ENCODE measurements at regions of chr3 and their contacts with region 1.

Region 1: DNA sequence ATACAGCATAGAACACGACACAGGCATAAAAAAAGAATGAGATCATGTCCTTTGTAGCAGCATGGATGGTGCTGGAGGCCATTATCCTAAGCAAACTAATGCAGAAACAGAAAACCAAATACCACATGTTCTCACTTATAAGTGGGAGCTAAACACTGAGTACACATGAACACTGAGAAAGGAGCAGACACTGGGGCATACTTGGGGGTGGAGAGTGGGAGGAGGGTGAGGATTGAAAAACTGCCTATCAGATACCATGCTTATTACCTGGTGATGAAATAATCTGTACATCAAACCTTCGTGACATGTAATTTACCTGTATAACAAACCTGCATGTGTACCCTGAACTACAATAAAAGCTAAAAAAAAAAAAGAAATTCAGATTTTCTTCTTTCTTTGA is 100.4 kb downstream of the PPM1L start:
- DNase-seq: no peak
- H3K4me3 ChIP-seq: no peak overlapping the region
- H3K27ac ChIP-seq: no peak overlapping the region
- H3K4me1 ChIP-seq: no peaks in the 10 kb centered on the region
- H3K27me3 ChIP-seq: no peaks in the 10 kb centered on the region
- CTCF ChIP-seq: no peak
- EP300 ChIP-seq: no peak
- POLR2A ChIP-seq: no peak

Region 2: DNA sequence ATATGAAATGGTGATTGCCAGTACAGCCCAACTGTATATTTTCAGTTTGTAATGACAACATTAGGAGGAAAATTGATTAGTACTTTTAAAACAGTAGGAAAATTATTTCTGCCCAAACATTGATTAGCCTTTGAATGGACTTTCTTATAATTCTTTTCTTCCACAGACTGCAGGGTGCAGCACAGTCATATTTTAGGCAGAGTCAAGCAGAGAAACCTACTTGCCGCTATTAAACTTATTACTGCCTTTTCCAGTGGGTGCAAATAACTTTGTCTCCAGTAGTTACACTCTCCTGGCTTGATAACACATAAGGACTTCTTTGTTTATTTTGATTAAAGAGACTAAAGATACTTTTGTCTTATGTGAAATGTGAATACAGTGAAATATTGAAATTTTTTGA is 15.0 kb before region 1 on chr3:
- in situ Hi-C with region 1: no loop called
- intact Hi-C with region 1: loop called (anchors 1 kb)
- DNase-seq: no peak
- H3K4me3 ChIP-seq: no peak overlapping the region
- H3K27ac ChIP-seq: no peak overlapping the region
- H3K4me1 ChIP-seq: peaks cover 0 to 18% (median 4%) of the 10 kb centered on the region in 4 donors
- H3K27me3 ChIP-seq: no peaks in the 10 kb centered on the region
- CTCF ChIP-seq: no peak
- EP300 ChIP-seq: no peak
- POLR2A ChIP-seq: no peak

Region 3: DNA sequence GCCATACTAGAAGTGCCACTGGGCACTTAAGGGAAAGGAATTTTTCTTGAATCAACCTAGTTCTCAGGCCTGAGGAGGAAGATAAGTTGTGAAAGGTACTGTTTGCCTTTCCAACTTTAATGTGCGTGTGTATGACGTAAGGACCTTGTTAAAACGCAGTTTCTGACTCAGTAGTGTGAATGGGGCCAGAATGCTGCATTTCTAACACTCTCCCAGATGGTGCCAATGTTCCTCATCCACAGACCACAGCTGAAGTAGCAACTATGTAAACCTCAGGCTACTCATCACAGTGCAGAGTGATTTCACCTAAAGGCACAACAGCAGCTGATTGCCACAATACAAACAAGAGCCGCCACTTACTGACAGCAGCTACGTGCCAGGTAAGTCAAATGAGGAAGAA is 743.7 kb after region 1 on chr3:
- in situ Hi-C with region 1: no loop called
- intact Hi-C with region 1: no loop called
- DNase-seq: no peak
- H3K4me3 ChIP-seq: no peak overlapping the region
- H3K27ac ChIP-seq: no peak overlapping the region
- H3K4me1 ChIP-seq: no peaks in the 10 kb centered on the region
- H3K27me3 ChIP-seq: no peaks in the 10 kb centered on the region
- CTCF ChIP-seq: no peak
- EP300 ChIP-seq: no peak
- POLR2A ChIP-seq: no peak

Measured in transverse colon (tissue), 4 donors.